ENCODE measurements at regions of chr1 and their contacts with region 1.

Region 1: DNA sequence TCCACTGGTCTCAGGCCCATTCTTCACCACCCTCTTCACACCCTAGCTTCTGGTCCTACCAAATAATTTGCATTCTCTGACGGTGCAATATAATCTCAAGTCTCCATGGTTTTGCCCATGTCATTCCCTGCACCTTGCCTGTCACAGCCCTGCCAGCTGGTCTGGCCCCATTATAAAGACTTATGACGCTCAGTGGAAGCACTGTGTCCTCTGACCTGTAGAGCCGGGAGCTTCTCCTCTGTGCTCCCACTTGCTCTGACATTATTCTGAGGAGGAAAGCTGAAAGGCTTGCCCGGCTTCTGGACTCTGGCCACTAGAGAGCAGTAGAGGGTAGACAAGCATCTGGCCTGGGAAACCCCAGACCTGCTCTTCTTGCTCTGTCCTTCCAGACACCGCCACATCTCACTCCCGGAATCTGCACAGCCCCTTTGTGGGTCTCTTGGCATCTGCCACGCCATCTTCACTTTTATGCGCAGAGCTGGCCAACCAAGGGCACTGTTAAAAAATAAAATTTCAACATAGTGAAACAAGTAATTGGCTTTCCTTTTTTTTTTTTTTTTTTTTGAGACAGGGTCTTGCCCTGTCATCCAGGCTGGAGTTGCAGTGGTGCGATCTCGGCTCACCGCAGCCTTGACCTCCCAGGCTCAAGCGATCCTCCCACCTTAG is 44.4 kb downstream of the NENF start:
- DNase-seq: peak; percentile 86 to 92 (median 91)
- H3K4me3 ChIP-seq: no peak overlapping the region
- H3K4me3 Mint-ChIP-seq: peak overlapping the region; percentile 31 to 59
- H3K27ac ChIP-seq: no peak overlapping the region
- H3K27ac Mint-ChIP-seq: peak overlapping the region; percentile 54 to 87 (median 69)
- H3K4me1 ChIP-seq: peaks cover 4 to 11% of the 10 kb centered on the region in 2 donors
- H3K4me1 Mint-ChIP-seq: peaks cover 19% of the 10 kb centered on the region
- H3K27me3 ChIP-seq: no peaks in the 10 kb centered on the region
- H3K27me3 Mint-ChIP-seq: peaks cover 5 to 21% (median 8%) of the 10 kb centered on the region in 3 donors
- CTCF ChIP-seq: peak; percentile 83

Region 2: DNA sequence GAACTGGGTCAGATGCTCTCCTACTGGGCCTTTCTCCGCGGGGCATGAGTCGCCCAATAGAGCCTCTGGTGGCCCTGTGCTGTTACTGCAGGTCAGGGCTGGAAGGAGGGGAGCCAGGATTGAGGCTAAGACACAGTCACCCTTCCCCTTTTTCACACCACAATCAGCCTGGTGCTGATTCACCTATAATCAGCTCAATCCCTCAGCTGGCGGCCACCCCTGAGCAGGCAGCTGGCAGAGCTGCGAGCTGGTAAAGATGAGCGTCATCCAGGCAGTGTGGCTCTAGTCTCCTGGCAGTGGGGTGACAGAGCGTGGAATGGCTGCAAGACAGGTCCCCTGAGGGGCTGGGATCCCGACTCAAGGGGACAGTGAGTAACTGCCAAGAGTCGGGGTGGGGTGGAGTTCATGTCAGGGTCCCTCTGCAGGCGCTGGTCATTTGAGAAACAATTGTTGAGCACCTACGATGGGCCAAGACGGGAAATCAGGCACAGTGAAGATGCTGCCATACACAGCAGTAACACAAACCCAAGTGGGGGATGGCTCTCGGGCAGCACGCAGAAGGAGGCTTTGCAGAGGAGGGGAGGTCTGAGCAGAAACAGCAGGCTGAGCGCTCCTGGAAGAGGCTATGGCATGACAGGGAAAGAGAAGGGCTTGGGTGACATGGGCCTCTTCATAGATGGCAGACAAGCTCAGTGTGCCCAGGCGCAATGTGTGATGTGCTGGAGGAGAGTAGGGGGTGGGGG is 153.2 kb after region 1 on chr1:
- intact Hi-C with region 1: loop called in 1 of 2 experiments (anchors 5 kb)
- DNase-seq: peak; percentile 90 to 95 (median 92)
- H3K4me3 ChIP-seq: no peak overlapping the region
- H3K4me3 Mint-ChIP-seq: no peak overlapping the region
- H3K27ac ChIP-seq: no peak overlapping the region
- H3K27ac Mint-ChIP-seq: no peak overlapping the region
- H3K4me1 ChIP-seq: peaks cover 18 to 23% of the 10 kb centered on the region in 2 donors
- H3K4me1 Mint-ChIP-seq: peaks cover 14% of the 10 kb centered on the region
- H3K27me3 ChIP-seq: no peaks in the 10 kb centered on the region
- H3K27me3 Mint-ChIP-seq: peaks cover 2 to 12% (median 3%) of the 10 kb centered on the region in 3 donors
- CTCF ChIP-seq: peak; percentile 95

Measured in CD14-positive monocyte (primary cell).